ENCODE measurements at regions of chr18 and their contacts with region 1.

Region 1: GRCh38 chr18:3995476-3996102 is 459.5 kb downstream of the DLGAP1 start:
- DNase-seq: peak in 1 of 2 donors; percentile 58
- ATAC-seq: no peak
- H3K4me3 ChIP-seq: peak overlapping the region; percentile 12 to 48
- H3K27ac ChIP-seq: no peak overlapping the region
- H3K4me1 ChIP-seq: no peaks in the 10 kb centered on the region
- H3K27me3 ChIP-seq: no peaks in the 10 kb centered on the region

Region 2: GRCh38 chr18:3869848-3870247 is 125.7 kb before region 1 on chr18:
- intact Hi-C with region 1: loop called (anchors 5 kb)
- DNase-seq: no peak
- ATAC-seq: peak; percentile 61
- H3K4me3 ChIP-seq: no peak overlapping the region
- H3K27ac ChIP-seq: no peak overlapping the region
- H3K4me1 ChIP-seq: no peaks in the 10 kb centered on the region
- H3K27me3 ChIP-seq: no peaks in the 10 kb centered on the region